ENCODE measurements at regions of chr3 and their contacts with region 1.

Region 1: GRCh38 chr3:187745201-187746058 is at the start of gene BCL6:
- DNase-seq: peak; percentile 92
- H3K4me3 Mint-ChIP-seq: peak within 1 kb of the TSS; percentile 97
- H3K27ac Mint-ChIP-seq: peak within 1 kb of the TSS; percentile 100
- H3K4me1 Mint-ChIP-seq: peaks cover 70% of the 10 kb centered on the region
- H3K27me3 Mint-ChIP-seq: peaks cover 4% of the 10 kb centered on the region
- total RNA-seq, gene BCL6: 12.0 to 12.7 TPM

Region 2: GRCh38 chr3:188000361-188000861 is 255.0 kb after region 1 on chr3:
- CTCF ChIA-PET with region 1: interaction called, 12 read pairs
- POLR2A ChIA-PET with region 1: interaction called, 3 read pairs
- DNase-seq: peak; percentile 24
- H3K4me3 Mint-ChIP-seq: peak overlapping the region; percentile 62
- H3K27ac Mint-ChIP-seq: peak overlapping the region; percentile 94
- H3K4me1 Mint-ChIP-seq: peaks cover 79% of the 10 kb centered on the region
- H3K27me3 Mint-ChIP-seq: no peaks in the 10 kb centered on the region